ENCODE measurements at regions of chr4 and their contacts with region 1.

Region 1: GRCh38 chr4:2008875-2009703 is at the start of gene NELFA:
- DNase-seq: peak; percentile 92 to 98 (median 96)
- ATAC-seq: peak; percentile 93
- H3K4me3 ChIP-seq: peak within 1 kb of the TSS; percentile 96
- H3K4me3 Mint-ChIP-seq: peak within 1 kb of the TSS; percentile 81 to 96 (median 94)
- H3K27ac ChIP-seq: peak within 1 kb of the TSS; percentile 99
- H3K27ac Mint-ChIP-seq: peak within 1 kb of the TSS; percentile 91 to 99 (median 96)
- H3K4me1 ChIP-seq: peaks cover 13 to 24% of the 10 kb centered on the region in 2 donors
- H3K4me1 Mint-ChIP-seq: peaks cover 30 to 38% (median 34%) of the 10 kb centered on the region in 7 donors
- H3K27me3 ChIP-seq: no peaks in the 10 kb centered on the region
- H3K27me3 Mint-ChIP-seq: peaks cover 0 to 20% (median 0%) of the 10 kb centered on the region in 5 donors
- total RNA-seq, gene NELFA: 32.7 to 50.1 (median 43.6) TPM

Region 2: DNA sequence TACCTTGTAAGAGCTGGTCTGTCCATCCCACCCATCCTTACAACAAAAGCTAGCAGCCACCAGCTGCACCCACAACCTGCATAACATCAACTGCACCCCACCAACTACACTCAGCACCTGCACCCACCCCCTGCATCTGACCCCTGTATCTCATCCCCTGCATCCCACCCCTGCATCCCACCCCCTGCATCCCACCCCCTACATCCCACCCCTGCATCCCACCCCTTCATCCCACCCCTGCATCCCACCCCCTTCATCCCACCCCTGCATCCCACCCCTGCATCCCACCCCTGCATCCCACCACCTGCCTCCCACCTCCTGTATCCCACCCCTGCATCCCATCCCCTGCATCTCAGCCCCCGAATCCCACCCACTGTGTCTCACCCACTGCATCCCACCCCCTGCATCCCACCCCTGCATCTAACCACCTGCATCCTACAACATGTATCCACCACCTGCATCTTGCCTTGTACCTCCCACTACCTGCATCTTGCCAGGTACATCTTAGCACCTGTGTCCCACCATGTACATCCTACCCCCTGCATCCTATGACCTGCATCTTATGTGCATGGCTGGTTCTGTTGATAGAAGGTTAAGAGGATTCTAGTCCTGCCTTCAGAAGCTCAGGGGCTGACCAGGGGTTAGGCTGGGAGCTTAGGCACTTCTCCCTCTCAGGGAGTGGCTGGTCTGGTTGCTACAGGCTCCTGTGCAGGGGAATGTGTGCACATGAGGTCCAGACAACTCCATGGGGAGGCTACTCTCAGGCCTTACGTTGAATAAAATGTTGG is 1442.4 kb before region 1 on chr4:
- CTCF ChIA-PET with region 1: no interaction called
- POLR2A ChIA-PET with region 1: no interaction called
- intact Hi-C with region 1: no loop called
- DNase-seq: no peak
- ATAC-seq: no peak
- H3K4me3 ChIP-seq: no peak overlapping the region
- H3K4me3 Mint-ChIP-seq: no peak overlapping the region
- H3K27ac ChIP-seq: no peak overlapping the region
- H3K27ac Mint-ChIP-seq: no peak overlapping the region
- H3K4me1 ChIP-seq: no peaks in the 10 kb centered on the region
- H3K4me1 Mint-ChIP-seq: no peaks in the 10 kb centered on the region
- H3K27me3 ChIP-seq: no peaks in the 10 kb centered on the region
- H3K27me3 Mint-ChIP-seq: peaks cover 4 to 41% (median 29%) of the 10 kb centered on the region in 5 donors

Region 3: GRCh38 chr4:1856042-1856788 is 152.9 kb before region 1 on chr4 and contains the start of gene LETM1:
- CTCF ChIA-PET with region 1: no interaction called
- POLR2A ChIA-PET with region 1: interaction called, 3 read pairs
- intact Hi-C with region 1: loop called (anchors 1 to 2 kb)
- DNase-seq: peak; percentile 79 to 96 (median 88)
- ATAC-seq: peak; percentile 98
- H3K4me3 ChIP-seq: peak within 1 kb of the TSS; percentile 86
- H3K4me3 Mint-ChIP-seq: peak within 1 kb of the TSS; percentile 67 to 88 (median 83)
- H3K27ac ChIP-seq: peak within 1 kb of the TSS; percentile 70
- H3K27ac Mint-ChIP-seq: peak within 1 kb of the TSS in 8 of 9 donors; percentile 17 to 80 (median 48)
- H3K4me1 ChIP-seq: peaks cover 10 to 14% of the 10 kb centered on the region in 2 donors
- H3K4me1 Mint-ChIP-seq: peaks cover 31 to 45% (median 41%) of the 10 kb centered on the region in 7 donors
- H3K27me3 ChIP-seq: no peaks in the 10 kb centered on the region
- H3K27me3 Mint-ChIP-seq: no peaks in the 10 kb centered on the region
- total RNA-seq, gene LETM1: 29.5 to 56.4 (median 36.0) TPM

Region 4: GRCh38 chr4:2041234-2042130 is 32.4 kb after region 1 on chr4:
- CTCF ChIA-PET with region 1: no interaction called
- POLR2A ChIA-PET with region 1: interaction called, 12 read pairs
- intact Hi-C with region 1: loop called (anchors 1 to 2 kb)
- DNase-seq: peak; percentile 62 to 93 (median 72)
- ATAC-seq: peak; percentile 75
- H3K4me3 ChIP-seq: peak overlapping the region; percentile 76
- H3K4me3 Mint-ChIP-seq: peak overlapping the region; percentile 56 to 85 (median 78)
- H3K27ac ChIP-seq: no peak overlapping the region
- H3K27ac Mint-ChIP-seq: peak overlapping the region in 1 of 9 donors; percentile 62
- H3K4me1 ChIP-seq: peaks cover 4 to 7% of the 10 kb centered on the region in 2 donors
- H3K4me1 Mint-ChIP-seq: peaks cover 0 to 9% (median 5%) of the 10 kb centered on the region in 7 donors
- H3K27me3 ChIP-seq: peaks cover 0 to 7% of the 10 kb centered on the region in 2 donors
- H3K27me3 Mint-ChIP-seq: peaks cover 17 to 33% (median 29%) of the 10 kb centered on the region in 5 donors

Region 5: GRCh38 chr4:2059034-2059725 is 50.1 kb after region 1 on chr4 and contains the start of gene NAT8L:
- CTCF ChIA-PET with region 1: no interaction called
- POLR2A ChIA-PET with region 1: no interaction called
- intact Hi-C with region 1: loop called (anchors 1 kb)
- DNase-seq: peak in 1 of 9 donors; percentile 59
- ATAC-seq: peak; percentile 55
- H3K4me3 ChIP-seq: no peak within 1 kb of the TSS
- H3K4me3 Mint-ChIP-seq: peak within 1 kb of the TSS in 7 of 10 donors; percentile 17 to 70 (median 38)
- H3K27ac ChIP-seq: no peak within 1 kb of the TSS
- H3K27ac Mint-ChIP-seq: no peak within 1 kb of the TSS
- H3K4me1 ChIP-seq: no peaks in the 10 kb centered on the region
- H3K4me1 Mint-ChIP-seq: peaks cover 0 to 6% (median 0%) of the 10 kb centered on the region in 7 donors
- H3K27me3 ChIP-seq: peaks cover 0 to 3% of the 10 kb centered on the region in 2 donors
- H3K27me3 Mint-ChIP-seq: peaks cover 22 to 40% (median 29%) of the 10 kb centered on the region in 5 donors
- total RNA-seq, gene NAT8L: 0.11 to 7.2 (median 0.24) TPM in 3 of 5 experiments, not detected in the others

Region 6: GRCh38 chr4:2172161-2172560 is 163.1 kb after region 1 on chr4:
- CTCF ChIA-PET with region 1: no interaction called
- POLR2A ChIA-PET with region 1: no interaction called
- intact Hi-C with region 1: loop called in 1 of 2 experiments (anchors 2 kb)
- DNase-seq: peak in 1 of 9 donors; percentile 30
- ATAC-seq: no peak
- H3K4me3 ChIP-seq: no peak overlapping the region
- H3K4me3 Mint-ChIP-seq: peak overlapping the region in 7 of 10 donors; percentile 13 to 76 (median 64)
- H3K27ac ChIP-seq: no peak overlapping the region
- H3K27ac Mint-ChIP-seq: peak overlapping the region in 5 of 9 donors; percentile 1 to 93 (median 61)
- H3K4me1 ChIP-seq: peaks cover 0 to 8% of the 10 kb centered on the region in 2 donors
- H3K4me1 Mint-ChIP-seq: peaks cover 8 to 86% (median 25%) of the 10 kb centered on the region in 7 donors
- H3K27me3 ChIP-seq: no peaks in the 10 kb centered on the region
- H3K27me3 Mint-ChIP-seq: no peaks in the 10 kb centered on the region

Measured in naive thymus-derived CD4-positive, alpha-beta T cell (primary cell).